HEK293 (cell line): ENCODE measurements at regions of chr11 and their contacts with region 1.

Region 1: GRCh38 chr11:74611369-74611861 is 19.0 kb downstream of the POLD3 start:
- H3K4me3 ChIP-seq: no peak overlapping the region
- H3K27ac ChIP-seq: no peak overlapping the region
- H3K4me1 ChIP-seq: no peaks in the 10 kb centered on the region
- CTCF ChIP-seq: no peak

Region 2: GRCh38 chr11:74739546-74740270 is 128.3 kb after region 1 on chr11:
- CTCF ChIA-PET with region 1: interaction called, 11 read pairs
- POLR2A ChIA-PET with region 1: no interaction called
- H3K4me3 ChIP-seq: no peak overlapping the region
- H3K27ac ChIP-seq: no peak overlapping the region
- H3K4me1 ChIP-seq: no peaks in the 10 kb centered on the region
- CTCF ChIP-seq: peak; percentile 44; the same call in 1 of the 2 replicates